ENCODE measurements at regions of chr5 and their contacts with region 1.

Region 1: GRCh38 chr5:138824924-138825863 is 49.9 kb downstream of the LRRTM2 start:
- DNase-seq: no peak
- H3K4me3 ChIP-seq: no peak overlapping the region
- H3K27ac ChIP-seq: peak overlapping the region in 23 of 59 donors; percentile 0 to 66 (median 31)
- H3K27me3 ChIP-seq: no peaks in the 10 kb centered on the region
- CTCF ChIP-seq: peak; percentile 40 to 80 (median 70)

Region 2: GRCh38 chr5:138752951-138753793 is 72.0 kb before region 1 on chr5 and contains the start of gene CTNNA1:
- intact Hi-C with region 1: loop called in 1 of 2 experiments (anchors 5 kb)
- DNase-seq: peak; percentile 5 to 69 (median 44)
- H3K4me3 ChIP-seq: peak within 1 kb of the TSS; percentile 52 to 93 (median 81)
- H3K27ac ChIP-seq: peak within 1 kb of the TSS; percentile 61 to 96 (median 92)
- H3K27me3 ChIP-seq: peaks cover 0 to 14% (median 0%) of the 10 kb centered on the region in 45 donors
- CTCF ChIP-seq: peak in 5 of 56 donors; percentile 4 to 26 (median 16)
- total RNA-seq, gene CTNNA1: 120 to 434 (median 206) TPM

Region 3: GRCh38 chr5:138911441-138911840 is 86.2 kb after region 1 on chr5:
- intact Hi-C with region 1: no loop called
- DNase-seq: no peak
- H3K4me3 ChIP-seq: no peak overlapping the region
- H3K27ac ChIP-seq: peak overlapping the region in 1 of 59 donors; percentile 8
- H3K27me3 ChIP-seq: no peaks in the 10 kb centered on the region
- CTCF ChIP-seq: no peak

Measured in dorsolateral prefrontal cortex (tissue), 120 donors.